PC-9 (cell line): ENCODE measurements at regions of chr5 and their contacts with region 1.

Region 1: GRCh38 chr5:31385774-31386537 is 145.9 kb downstream of the DROSHA start:
- DNase-seq: peak; percentile 70 to 77
- H3K4me3 ChIP-seq: no peak overlapping the region
- H3K27ac ChIP-seq: peak overlapping the region; percentile 59
- H3K4me1 ChIP-seq: peaks cover 12% of the 10 kb centered on the region
- H3K27me3 ChIP-seq: no peaks in the 10 kb centered on the region
- CTCF ChIP-seq: no peak

Region 2: GRCh38 chr5:30729267-30729666 is 656.7 kb before region 1 on chr5:
- CTCF ChIA-PET with region 1: no interaction called
- POLR2A ChIA-PET with region 1: no interaction called
- intact Hi-C with region 1: no loop called
- DNase-seq: no peak
- H3K4me3 ChIP-seq: no peak overlapping the region
- H3K27ac ChIP-seq: no peak overlapping the region
- H3K4me1 ChIP-seq: no peaks in the 10 kb centered on the region
- H3K27me3 ChIP-seq: no peaks in the 10 kb centered on the region
- CTCF ChIP-seq: no peak

Region 3: DNA sequence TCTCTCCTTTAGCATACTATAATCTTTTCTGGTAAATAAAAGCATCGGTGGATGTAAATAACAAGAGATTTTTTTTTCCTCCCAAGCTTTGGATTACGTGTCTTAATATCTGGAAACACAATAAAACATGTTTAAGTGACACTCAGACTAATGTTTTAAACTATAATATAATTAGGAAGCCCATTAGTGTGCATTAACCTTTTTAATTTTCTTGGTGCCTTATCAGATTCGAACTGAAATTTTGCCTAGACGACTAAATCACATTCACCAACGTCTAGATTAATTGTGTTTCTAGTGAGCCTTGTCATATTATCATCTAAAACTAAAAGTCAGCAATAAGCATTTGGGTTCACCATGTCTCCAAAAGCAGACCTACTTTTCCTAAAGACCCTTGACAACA is 82.3 kb before region 1 on chr5:
- CTCF ChIA-PET with region 1: no interaction called
- POLR2A ChIA-PET with region 1: interaction called, 12 read pairs
- intact Hi-C with region 1: no loop called
- DNase-seq: no peak
- H3K4me3 ChIP-seq: no peak overlapping the region
- H3K27ac ChIP-seq: no peak overlapping the region
- H3K4me1 ChIP-seq: no peaks in the 10 kb centered on the region
- H3K27me3 ChIP-seq: 0 out of 2 replicates have a peak, but pooled peaks cover 7% of the 10 kb centered on the region
- CTCF ChIP-seq: no peak

Region 4: DNA sequence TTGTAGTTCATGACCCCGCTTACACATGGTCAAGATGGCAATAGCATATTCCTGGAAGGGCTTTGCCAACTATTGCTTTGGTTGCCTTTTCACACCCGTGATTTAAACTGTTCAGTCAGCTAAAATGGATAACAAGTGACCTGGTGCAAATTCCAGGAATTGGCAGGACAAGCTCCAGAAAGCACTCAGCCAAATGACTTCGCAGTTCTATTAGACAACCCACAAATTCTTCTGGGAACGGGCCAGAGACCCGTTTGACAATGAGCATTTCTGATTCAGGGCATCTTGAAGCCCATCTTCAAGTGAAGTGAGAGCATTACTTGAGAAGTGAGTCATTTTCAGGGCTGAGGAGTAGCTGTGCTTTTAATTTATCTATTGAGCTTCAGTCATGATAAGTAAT is 19.0 kb before region 1 on chr5:
- CTCF ChIA-PET with region 1: no interaction called
- POLR2A ChIA-PET with region 1: no interaction called
- intact Hi-C with region 1: loop called (anchors 2 kb)
- DNase-seq: no peak
- H3K4me3 ChIP-seq: no peak overlapping the region
- H3K27ac ChIP-seq: no peak overlapping the region
- H3K4me1 ChIP-seq: no peaks in the 10 kb centered on the region
- H3K27me3 ChIP-seq: peaks cover 10% of the 10 kb centered on the region; the same call in 1 of the 2 replicates
- CTCF ChIP-seq: no peak

Region 5: GRCh38 chr5:31397926-31398557 is 12.1 kb after region 1 on chr5:
- CTCF ChIA-PET with region 1: no interaction called
- POLR2A ChIA-PET with region 1: no interaction called
- intact Hi-C with region 1: loop called (anchors 1 kb)
- DNase-seq: no peak
- H3K4me3 ChIP-seq: no peak overlapping the region
- H3K27ac ChIP-seq: no peak overlapping the region
- H3K4me1 ChIP-seq: peaks cover 31% of the 10 kb centered on the region
- H3K27me3 ChIP-seq: no peaks in the 10 kb centered on the region
- CTCF ChIP-seq: no peak